Naive thymus-derived CD4-positive, alpha-beta T cell (primary cell): ENCODE measurements at regions of chr1 and their contacts with region 1.

Region 1: DNA sequence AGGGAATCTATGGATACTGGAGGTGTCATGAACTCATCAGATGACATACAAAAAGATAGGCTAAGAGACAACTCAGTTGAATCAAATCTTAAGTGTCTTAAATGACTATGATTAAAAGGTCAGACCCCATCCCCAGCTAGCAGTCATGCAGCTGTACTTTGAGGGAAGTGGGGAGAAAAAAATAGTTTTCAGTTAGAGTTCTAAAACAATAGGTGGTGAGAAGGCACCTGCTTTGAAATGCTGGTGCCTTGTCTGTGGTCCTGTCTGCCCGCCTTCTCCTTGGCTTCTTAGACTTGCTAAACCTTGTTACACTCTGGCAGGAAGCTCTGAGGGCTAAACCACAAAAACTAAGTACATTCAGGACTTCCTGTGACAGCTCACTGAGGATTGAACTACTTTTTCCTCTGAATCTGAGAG is 15.3 kb downstream of the CD2 start:
- DNase-seq: peak in 8 of 9 donors; percentile 60 to 92 (median 86)
- ATAC-seq: peak; percentile 91
- H3K4me3 ChIP-seq: peak overlapping the region; percentile 24
- H3K4me3 Mint-ChIP-seq: peak overlapping the region; percentile 51 to 99 (median 78)
- H3K27ac ChIP-seq: peak overlapping the region; percentile 89
- H3K27ac Mint-ChIP-seq: peak overlapping the region; percentile 84 to 100 (median 97)
- H3K4me1 ChIP-seq: peaks cover 80 to 81% of the 10 kb centered on the region in 2 donors
- H3K4me1 Mint-ChIP-seq: peaks cover 64 to 97% (median 91%) of the 10 kb centered on the region in 7 donors
- H3K27me3 ChIP-seq: no peaks in the 10 kb centered on the region
- H3K27me3 Mint-ChIP-seq: no peaks in the 10 kb centered on the region

Region 2: GRCh38 chr1:116426401-116426800 is 343.2 kb before region 1 on chr1:
- CTCF ChIA-PET with region 1: no interaction called
- POLR2A ChIA-PET with region 1: no interaction called
- intact Hi-C with region 1: no loop called
- DNase-seq: no peak
- ATAC-seq: no peak
- H3K4me3 ChIP-seq: no peak overlapping the region
- H3K4me3 Mint-ChIP-seq: no peak overlapping the region
- H3K27ac ChIP-seq: no peak overlapping the region
- H3K27ac Mint-ChIP-seq: no peak overlapping the region
- H3K4me1 ChIP-seq: no peaks in the 10 kb centered on the region
- H3K4me1 Mint-ChIP-seq: no peaks in the 10 kb centered on the region
- H3K27me3 ChIP-seq: no peaks in the 10 kb centered on the region
- H3K27me3 Mint-ChIP-seq: peaks cover 0 to 36% (median 0%) of the 10 kb centered on the region in 5 donors

Region 3: DNA sequence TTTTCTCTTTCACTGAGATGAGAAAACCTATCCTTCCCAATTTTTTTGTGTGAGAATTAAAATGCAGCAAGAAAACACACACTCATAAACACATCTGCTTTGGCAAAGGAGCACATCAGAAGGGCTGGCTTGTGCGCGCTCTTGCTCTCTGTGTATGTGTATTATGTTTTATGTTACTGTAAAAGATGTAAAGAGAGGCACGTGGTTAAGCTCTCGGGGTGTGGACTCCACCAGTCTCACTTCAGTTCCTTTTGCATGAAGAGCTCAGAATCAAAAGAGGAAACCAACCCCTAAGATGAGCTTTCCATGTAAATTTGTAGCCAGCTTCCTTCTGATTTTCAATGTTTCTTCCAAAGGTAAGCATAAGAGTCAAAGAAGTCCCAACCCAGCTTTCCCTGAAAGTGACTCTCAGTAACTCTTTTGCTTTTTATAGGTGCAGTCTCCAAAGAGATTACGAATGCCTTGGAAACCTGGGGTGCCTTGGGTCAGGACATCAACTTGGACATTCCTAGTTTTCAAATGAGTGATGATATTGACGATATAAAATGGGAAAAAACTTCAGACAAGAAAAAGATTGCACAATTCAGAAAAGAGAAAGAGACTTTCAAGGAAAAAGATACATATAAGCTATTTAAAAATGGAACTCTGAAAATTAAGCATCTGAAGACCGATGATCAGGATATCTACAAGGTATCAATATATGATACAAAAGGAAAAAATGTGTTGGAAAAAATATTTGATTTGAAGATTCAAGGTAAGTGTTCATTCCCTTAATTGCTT is 15.2 kb before region 1 on chr1 and contains the start of gene CD2:
- CTCF ChIA-PET with region 1: interaction called, 40 read pairs
- POLR2A ChIA-PET with region 1: interaction called, 367 read pairs
- intact Hi-C with region 1: loop called (anchors 1 kb)
- DNase-seq: peak in 7 of 9 donors; percentile 58 to 79 (median 71)
- ATAC-seq: peak; percentile 91
- H3K4me3 ChIP-seq: peak within 1 kb of the TSS; percentile 90
- H3K4me3 Mint-ChIP-seq: peak within 1 kb of the TSS; percentile 91 to 100 (median 98)
- H3K27ac ChIP-seq: peak within 1 kb of the TSS; percentile 89
- H3K27ac Mint-ChIP-seq: peak within 1 kb of the TSS; percentile 93 to 99 (median 97)
- H3K4me1 ChIP-seq: peaks cover 27 to 31% of the 10 kb centered on the region in 2 donors
- H3K4me1 Mint-ChIP-seq: peaks cover 25 to 47% (median 43%) of the 10 kb centered on the region in 7 donors
- H3K27me3 ChIP-seq: no peaks in the 10 kb centered on the region
- H3K27me3 Mint-ChIP-seq: no peaks in the 10 kb centered on the region
- total RNA-seq, gene CD2: 105 to 307 (median 174) TPM

Region 4: DNA sequence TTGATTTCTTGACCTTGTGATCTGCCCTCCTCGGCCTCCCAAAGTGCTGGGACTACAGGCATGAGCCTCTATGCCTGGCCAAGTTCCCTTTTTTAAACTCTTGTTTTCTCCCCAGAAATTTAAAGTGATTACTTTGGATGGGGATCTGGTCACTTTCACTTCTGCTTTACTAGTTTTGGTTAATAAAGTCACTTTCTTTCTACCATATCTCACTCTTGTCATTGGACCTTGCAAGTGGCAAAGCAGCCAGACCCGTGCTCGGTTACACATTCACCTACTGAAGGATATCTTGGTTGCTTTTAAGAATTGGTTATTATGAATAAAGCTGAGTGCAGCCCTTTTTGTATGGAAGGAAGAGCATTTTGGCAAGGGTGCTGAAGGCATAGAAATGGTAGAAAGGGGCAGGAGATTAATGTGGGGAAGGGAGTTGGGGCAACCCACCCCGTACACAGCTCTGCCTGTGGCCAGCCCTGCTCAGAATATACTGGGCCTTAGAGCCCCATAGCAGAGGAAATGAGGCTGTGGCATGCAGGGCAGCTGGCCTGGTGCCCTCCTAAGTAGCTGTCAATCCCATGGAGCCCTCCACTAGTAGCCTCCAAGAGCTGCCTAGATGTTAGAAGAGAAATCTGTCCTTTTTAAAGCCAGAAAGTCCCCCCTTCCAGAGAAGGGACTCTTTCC is 25.4 kb after region 1 on chr1:
- CTCF ChIA-PET with region 1: interaction called, 3 read pairs
- POLR2A ChIA-PET with region 1: interaction called, 8 read pairs
- intact Hi-C with region 1: loop called in 1 of 2 experiments (anchors 2 kb)
- DNase-seq: no peak
- ATAC-seq: peak; percentile 62
- H3K4me3 ChIP-seq: no peak overlapping the region
- H3K4me3 Mint-ChIP-seq: no peak overlapping the region
- H3K27ac ChIP-seq: no peak overlapping the region
- H3K27ac Mint-ChIP-seq: peak overlapping the region in 5 of 9 donors; percentile 26 to 61 (median 45)
- H3K4me1 ChIP-seq: peaks cover 24 to 29% of the 10 kb centered on the region in 2 donors
- H3K4me1 Mint-ChIP-seq: peaks cover 43 to 68% (median 60%) of the 10 kb centered on the region in 7 donors
- H3K27me3 ChIP-seq: no peaks in the 10 kb centered on the region
- H3K27me3 Mint-ChIP-seq: no peaks in the 10 kb centered on the region